ENCODE measurements at regions of chr4 and their contacts with region 1.

Region 1: DNA sequence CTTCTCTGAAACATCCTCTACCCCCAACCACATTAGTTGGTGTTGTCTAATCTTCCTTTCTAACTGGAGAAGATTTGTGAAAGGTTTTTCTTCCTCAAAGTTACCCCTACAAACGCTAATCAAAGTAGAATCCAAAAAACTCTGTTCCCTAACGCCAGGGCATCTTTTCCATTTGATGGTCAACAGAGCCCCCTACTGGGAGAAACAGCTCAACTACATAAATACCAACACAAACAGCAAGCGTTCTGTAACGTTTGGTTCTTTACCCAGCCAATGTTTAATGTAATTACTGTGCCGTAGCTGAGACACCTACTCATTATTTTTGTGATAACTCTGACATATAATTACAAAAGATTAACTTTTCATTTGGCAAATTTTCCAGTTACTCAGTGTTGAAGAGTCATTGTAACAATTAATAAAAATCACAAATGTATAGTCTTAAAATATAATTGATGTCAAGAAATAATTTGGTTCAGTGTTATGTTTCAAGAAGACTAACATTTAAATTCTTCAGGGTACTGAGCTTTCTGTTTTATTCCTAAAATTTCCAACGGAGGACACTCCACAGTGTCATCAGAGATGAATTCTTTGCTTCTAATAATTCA is 94.9 kb upstream of the TBC1D9 start:
- DNase-seq: peak; percentile 65
- ATAC-seq: peak; percentile 84
- H3K4me3 ChIP-seq: no peak overlapping the region
- H3K27ac ChIP-seq: no peak overlapping the region
- H3K4me1 ChIP-seq: no peaks in the 10 kb centered on the region
- H3K27me3 ChIP-seq: peaks cover 12% of the 10 kb centered on the region
- CTCF ChIP-seq: peak; percentile 89
- POLR2A ChIP-seq: no peak
- RAD21 ChIP-seq: peak; percentile 95

Region 2: DNA sequence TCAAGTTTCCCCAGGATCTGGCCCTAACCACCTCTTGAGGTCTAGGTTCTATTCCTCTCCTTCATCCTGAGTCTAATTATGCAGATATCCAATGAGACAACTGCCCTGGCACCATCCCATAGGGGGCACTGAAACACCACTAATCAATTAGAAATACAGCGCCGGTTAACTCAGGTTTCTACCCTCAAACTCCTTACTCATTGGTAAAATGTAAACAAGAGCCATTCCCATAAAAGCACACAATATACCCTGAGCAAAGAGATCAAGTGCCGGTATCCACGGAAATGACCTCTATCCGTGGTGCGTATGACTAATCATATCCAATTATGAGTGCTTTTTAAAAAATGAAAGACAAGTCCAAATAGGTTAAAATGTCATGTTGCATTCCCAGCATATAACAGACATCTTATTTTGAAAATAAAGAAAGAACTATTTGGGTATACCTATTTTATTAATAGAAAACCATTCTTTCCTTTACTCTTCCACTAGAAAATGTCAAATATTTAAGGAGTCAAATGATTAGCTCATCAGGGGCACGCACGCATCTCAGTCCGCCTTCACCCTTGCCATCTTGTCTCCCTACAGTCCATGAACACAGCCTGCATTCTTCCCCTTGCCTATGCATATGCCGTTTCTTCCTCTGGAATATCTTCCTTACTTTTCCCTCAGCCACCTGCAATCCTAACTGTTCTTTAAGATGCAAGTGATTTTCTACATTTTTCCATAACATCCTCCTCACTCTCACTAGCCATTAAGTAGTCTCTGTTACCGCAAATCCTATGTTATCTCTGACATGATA is 838.2 kb before region 1 on chr4:
- CTCF ChIA-PET with region 1: no interaction called
- POLR2A ChIA-PET with region 1: no interaction called
- dilution Hi-C with region 1: no loop called
- in situ Hi-C with region 1: loop called (anchors 25 kb)
- intact Hi-C with region 1: loop called (anchors 2 kb)
- DNase-seq: peak; percentile 95
- ATAC-seq: peak; percentile 98
- H3K4me3 ChIP-seq: no peak overlapping the region
- H3K27ac ChIP-seq: no peak overlapping the region
- H3K4me1 ChIP-seq: peaks cover 4% of the 10 kb centered on the region
- H3K27me3 ChIP-seq: no peaks in the 10 kb centered on the region
- CTCF ChIP-seq: peak; percentile 91
- POLR2A ChIP-seq: no peak
- RAD21 ChIP-seq: peak; percentile 95

Region 3: GRCh38 chr4:140427106-140427961 is 423.8 kb before region 1 on chr4 and contains the start of gene CLGN:
- CTCF ChIA-PET with region 1: no interaction called
- POLR2A ChIA-PET with region 1: no interaction called
- dilution Hi-C with region 1: no loop called
- in situ Hi-C with region 1: no loop called
- intact Hi-C with region 1: loop called (anchors 2 kb)
- DNase-seq: peak; percentile 44
- ATAC-seq: peak; percentile 95
- H3K4me3 ChIP-seq: peak within 1 kb of the TSS; percentile 79
- H3K27ac ChIP-seq: no peak within 1 kb of the TSS; the same call in 1 of the 2 replicates
- H3K4me1 ChIP-seq: no peaks in the 10 kb centered on the region
- H3K27me3 ChIP-seq: peaks cover 13% of the 10 kb centered on the region
- CTCF ChIP-seq: peak; percentile 38
- POLR2A ChIP-seq: no peak
- RAD21 ChIP-seq: no peak
- total RNA-seq, gene CLGN: 0.36 and 1.4 TPM in 2 replicates

Region 4: DNA sequence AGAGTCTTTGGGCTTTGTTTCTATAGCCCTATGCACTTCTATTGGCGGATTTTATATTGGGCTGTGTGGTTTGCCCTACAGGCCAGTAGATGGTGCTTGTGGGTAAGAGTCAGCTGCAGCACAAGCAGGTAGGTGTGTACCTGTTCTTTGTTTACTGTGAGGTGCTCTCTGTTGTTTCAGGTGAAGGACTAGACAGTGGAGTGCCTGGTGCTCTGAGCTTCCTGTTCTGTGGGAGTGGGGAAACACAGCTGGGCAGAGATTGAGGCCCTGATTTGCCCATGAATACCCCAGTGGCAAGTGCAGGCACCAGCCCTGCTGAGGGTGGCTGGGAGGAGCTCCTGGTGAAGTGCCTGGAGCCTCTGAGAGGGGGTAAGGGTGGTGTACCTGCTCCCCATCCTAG is 256.1 kb before region 1 on chr4:
- CTCF ChIA-PET with region 1: no interaction called
- POLR2A ChIA-PET with region 1: no interaction called
- dilution Hi-C with region 1: no loop called
- in situ Hi-C with region 1: no loop called
- intact Hi-C with region 1: loop called (anchors 1 kb)
- DNase-seq: peak; percentile 9
- ATAC-seq: peak; percentile 40; the same call in 1 of the 2 replicates
- H3K4me3 ChIP-seq: no peak overlapping the region
- H3K27ac ChIP-seq: no peak overlapping the region
- H3K4me1 ChIP-seq: no peaks in the 10 kb centered on the region
- H3K27me3 ChIP-seq: peaks cover 14% of the 10 kb centered on the region
- CTCF ChIP-seq: peak; percentile 39
- POLR2A ChIP-seq: no peak
- RAD21 ChIP-seq: peak; percentile 28; the same call in 1 of the 2 replicates

Region 5: DNA sequence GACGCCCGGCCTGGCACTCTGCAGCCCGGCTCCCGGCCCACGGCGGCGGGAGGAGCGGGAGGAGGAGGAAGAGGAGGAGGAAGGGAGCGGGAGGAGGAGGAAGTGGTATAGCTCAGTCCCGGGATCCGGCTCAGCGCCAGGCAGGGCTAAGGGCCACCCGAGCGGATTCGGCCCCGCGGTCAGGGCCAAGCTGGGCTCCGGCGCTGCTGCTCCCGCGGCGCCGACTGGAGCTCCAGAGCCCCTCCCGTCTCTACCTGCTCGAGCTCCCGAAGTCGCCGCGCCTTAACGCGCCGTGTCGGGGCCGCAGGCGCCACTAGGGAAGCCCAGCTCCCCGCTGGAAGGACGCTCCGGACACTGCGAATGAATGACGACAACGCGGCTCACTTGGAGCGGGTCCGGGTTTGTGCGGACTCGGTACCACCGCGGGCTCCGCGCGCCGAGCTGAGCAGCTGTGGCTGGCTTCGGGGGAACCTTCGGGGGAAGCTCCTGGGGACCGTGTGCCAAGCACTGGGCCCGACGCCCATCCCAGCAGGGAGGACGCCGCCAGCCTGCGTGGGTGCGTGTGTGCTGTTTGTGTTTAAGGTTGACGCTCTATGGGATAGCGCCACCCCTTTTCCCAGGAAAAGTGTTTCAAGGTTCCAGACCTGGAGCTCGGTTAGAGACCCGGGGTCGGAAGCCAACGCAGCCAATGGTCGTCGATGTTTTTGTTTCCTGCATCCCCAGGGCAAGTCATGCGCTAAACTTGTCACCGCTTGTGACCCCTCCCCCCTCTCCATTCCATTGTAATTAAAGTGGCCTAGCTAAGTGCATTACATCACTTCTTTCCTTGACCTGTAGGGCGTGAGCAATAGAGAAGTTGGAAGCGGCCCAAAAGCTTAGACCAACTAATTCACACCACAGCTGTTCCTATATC is 94.6 kb before region 1 on chr4 and contains the start of gene TBC1D9:
- CTCF ChIA-PET with region 1: no interaction called
- POLR2A ChIA-PET with region 1: no interaction called
- dilution Hi-C with region 1: no loop called
- in situ Hi-C with region 1: no loop called
- intact Hi-C with region 1: loop called (anchors 5 kb)
- DNase-seq: peak; percentile 55
- ATAC-seq: peak; percentile 80
- H3K4me3 ChIP-seq: peak within 1 kb of the TSS; percentile 89
- H3K27ac ChIP-seq: peak within 1 kb of the TSS; percentile 75
- H3K4me1 ChIP-seq: no peaks in the 10 kb centered on the region
- H3K27me3 ChIP-seq: no peaks in the 10 kb centered on the region
- CTCF ChIP-seq: no peak
- POLR2A ChIP-seq: no peak
- RAD21 ChIP-seq: no peak
- total RNA-seq, gene TBC1D9: 15.2 and 16.9 TPM in 2 replicates

Region 6: DNA sequence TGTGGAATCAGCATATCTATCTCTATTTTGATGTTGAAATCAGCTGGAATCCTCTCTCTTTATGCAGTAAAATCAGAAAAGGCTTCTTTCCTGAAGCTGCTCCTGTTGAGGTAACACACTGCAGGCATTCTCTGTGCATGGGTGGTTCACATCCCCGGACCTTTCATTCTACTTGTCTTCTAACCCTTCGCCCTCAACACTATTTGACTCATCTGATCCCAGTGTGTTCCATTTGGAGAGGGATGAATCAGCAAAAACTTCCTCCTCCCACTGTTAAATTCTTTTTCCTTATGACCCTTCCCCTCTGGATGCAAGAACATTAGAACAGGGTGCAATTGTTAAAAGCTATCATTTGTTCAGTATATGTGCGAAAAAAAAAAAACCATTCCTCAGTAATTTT is 214.7 kb after region 1 on chr4:
- CTCF ChIA-PET with region 1: no interaction called
- POLR2A ChIA-PET with region 1: no interaction called
- dilution Hi-C with region 1: no loop called
- in situ Hi-C with region 1: no loop called
- intact Hi-C with region 1: no loop called
- DNase-seq: no peak
- ATAC-seq: no peak
- H3K4me3 ChIP-seq: no peak overlapping the region
- H3K27ac ChIP-seq: no peak overlapping the region
- H3K4me1 ChIP-seq: no peaks in the 10 kb centered on the region
- H3K27me3 ChIP-seq: no peaks in the 10 kb centered on the region
- CTCF ChIP-seq: no peak
- POLR2A ChIP-seq: no peak
- RAD21 ChIP-seq: no peak

Measured in IMR-90 (cell line).